Activated naive CD4-positive, alpha-beta T cell treated with anti-CD3 and anti-CD28 coated beads for 36 hours (primary cell): ENCODE measurements at regions of chr14 and their contacts with region 1.

Region 1: GRCh38 chr14:49620182-49621113 is at the starts of genes MGAT2 and RPL36AL:
- DNase-seq: peak; percentile 97
- H3K4me3 Mint-ChIP-seq: peak within 1 kb of the TSS; percentile 97
- H3K27ac Mint-ChIP-seq: peak within 1 kb of the TSS; percentile 97
- H3K4me1 Mint-ChIP-seq: peaks cover 52% of the 10 kb centered on the region
- H3K27me3 Mint-ChIP-seq: no peaks in the 10 kb centered on the region
- total RNA-seq, gene MGAT2: 20.6 to 20.7 TPM
- total RNA-seq, gene RPL36AL: 250 to 266 TPM

Region 2: GRCh38 chr14:49598485-49599300 is 21.8 kb before region 1 on chr14 and contains the start of gene LRR1:
- CTCF ChIA-PET with region 1: interaction called, 5 read pairs
- intact Hi-C with region 1: loop called (anchors 1 kb)
- DNase-seq: peak; percentile 87
- H3K4me3 Mint-ChIP-seq: peak within 1 kb of the TSS; percentile 99
- H3K27ac Mint-ChIP-seq: peak within 1 kb of the TSS; percentile 99
- H3K4me1 Mint-ChIP-seq: peaks cover 20% of the 10 kb centered on the region
- H3K27me3 Mint-ChIP-seq: no peaks in the 10 kb centered on the region
- total RNA-seq, gene LRR1: 47.7 to 49.1 TPM